ENCODE measurements at regions of chr6 and their contacts with region 1.

Region 1: GRCh38 chr6:151451950-151452749 is at the start of gene RMND1:
- H3K4me3 ChIP-seq: peak within 1 kb of the TSS; percentile 97
- H3K27ac ChIP-seq: peak within 1 kb of the TSS; percentile 85
- H3K4me1 ChIP-seq: peaks cover 4% of the 10 kb centered on the region; the same call in 1 of the 2 replicates
- CTCF ChIP-seq: no peak

Region 2: DNA sequence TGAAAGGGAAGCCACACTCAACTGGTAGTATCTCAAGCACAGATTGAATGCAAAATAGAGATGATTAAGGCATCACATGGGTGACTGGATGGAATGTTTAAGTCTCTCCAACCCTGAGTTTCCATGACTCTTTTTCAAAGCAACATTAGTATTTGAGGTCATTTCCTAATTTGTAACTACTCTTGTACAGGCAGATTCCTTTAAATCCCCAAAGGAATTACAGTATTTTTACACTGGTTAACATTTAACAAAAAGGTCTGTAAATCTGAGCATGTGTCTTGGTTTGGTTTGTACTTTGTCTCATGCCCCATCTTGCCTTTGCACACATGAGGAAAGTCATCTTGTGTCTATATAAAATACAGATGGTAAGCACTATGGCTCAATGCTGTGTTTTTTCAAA is 15.3 kb before region 1 on chr6:
- CTCF ChIA-PET with region 1: interaction called, 6 read pairs
- POLR2A ChIA-PET with region 1: interaction called, 13 read pairs
- H3K4me3 ChIP-seq: no peak overlapping the region
- H3K27ac ChIP-seq: no peak overlapping the region
- H3K4me1 ChIP-seq: no peaks in the 10 kb centered on the region
- CTCF ChIP-seq: no peak